ENCODE measurements at regions of chr9 and their contacts with region 1.

Region 1: DNA sequence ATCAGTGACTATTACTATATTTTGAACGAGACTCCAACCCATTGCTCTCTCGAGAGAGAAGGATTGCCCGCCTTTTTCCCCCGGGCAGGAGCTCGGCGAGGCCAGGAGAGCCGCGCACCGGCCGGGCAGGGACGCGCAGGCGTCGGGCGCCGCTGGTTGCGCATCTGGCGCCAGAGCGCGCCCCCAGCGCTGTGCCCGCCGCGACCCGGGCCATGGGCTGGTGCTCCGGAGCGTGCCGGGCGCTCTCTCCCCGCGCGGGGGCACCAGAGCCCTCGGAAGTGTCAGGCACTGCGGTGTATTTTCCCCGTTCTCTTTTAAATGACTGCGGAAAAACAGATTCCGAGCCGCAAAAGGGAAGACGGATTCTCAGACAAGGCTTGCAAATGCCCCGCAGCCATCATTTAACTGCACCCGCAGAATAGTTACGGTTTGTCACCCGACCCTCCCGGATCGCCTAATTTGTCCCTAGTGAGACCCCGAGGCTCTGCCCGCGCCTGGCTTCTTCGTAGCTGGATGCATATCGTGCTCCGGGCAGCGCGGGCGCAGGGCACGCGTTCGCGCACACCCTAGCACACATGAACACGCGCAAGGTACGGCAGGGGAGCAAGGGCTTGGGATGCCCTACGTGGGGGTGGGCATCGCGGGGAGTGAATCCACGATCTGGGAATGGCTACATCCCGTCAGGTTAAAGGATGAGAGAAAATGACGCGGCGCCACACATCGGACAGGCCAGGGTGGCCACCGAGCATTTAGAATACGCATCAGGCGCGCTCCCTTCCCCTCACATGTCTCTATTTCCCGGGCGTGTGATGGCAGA is 1.1 kb upstream of the NTRK2 start:
- DNase-seq: peak; percentile 92
- H3K4me3 ChIP-seq: peak overlapping the region; percentile 44 to 94 (median 45)
- H3K27ac ChIP-seq: peak overlapping the region; percentile 57 to 93 (median 89)
- H3K4me1 ChIP-seq: no peaks in the 10 kb centered on the region
- H3K27me3 ChIP-seq: no peaks in the 10 kb centered on the region
- CTCF ChIP-seq: peak; percentile 21 to 96 (median 75)
- POLR2A ChIP-seq: peak in 1 of 2 donors; percentile 37

Region 2: DNA sequence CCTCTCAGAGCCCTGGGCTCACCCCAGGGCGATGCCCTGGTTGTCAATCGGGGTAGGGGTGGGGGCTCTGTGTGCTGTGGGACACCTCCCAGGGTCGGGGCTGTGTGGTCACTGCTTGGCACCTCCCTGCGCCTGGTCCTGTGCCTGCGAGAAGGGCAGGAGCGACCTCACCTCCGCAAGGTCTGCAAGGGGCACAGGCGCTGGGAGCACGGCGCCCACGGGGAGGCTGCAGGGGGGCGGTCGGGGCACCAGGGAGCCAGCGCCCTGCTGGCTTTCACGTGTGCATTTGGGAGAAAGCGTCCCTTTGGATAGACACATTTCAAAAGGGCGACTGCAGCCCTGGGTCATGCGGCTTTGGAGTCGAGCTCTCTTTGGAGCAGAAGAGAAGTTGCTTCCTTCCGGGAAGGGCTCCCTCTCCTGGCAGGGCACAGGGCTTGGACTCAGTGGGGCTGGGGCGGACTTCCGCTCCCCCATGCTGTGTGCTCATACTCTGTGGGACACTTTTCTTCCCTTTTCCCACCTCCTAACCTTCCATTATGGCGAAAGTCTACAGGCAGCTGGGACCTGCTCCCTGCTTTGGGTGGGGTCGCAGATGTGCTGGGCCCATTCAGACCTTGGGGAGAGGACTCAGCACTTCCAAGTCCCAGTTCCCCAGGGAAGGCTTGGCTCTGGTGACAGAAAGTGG is 275.0 kb before region 1 on chr9:
- intact Hi-C with region 1: no loop called
- DNase-seq: no peak
- H3K4me3 ChIP-seq: no peak overlapping the region
- H3K27ac ChIP-seq: no peak overlapping the region
- H3K4me1 ChIP-seq: peaks cover 0 to 7% of the 10 kb centered on the region in 2 donors
- H3K27me3 ChIP-seq: no peaks in the 10 kb centered on the region
- CTCF ChIP-seq: no peak
- POLR2A ChIP-seq: no peak

Region 3: DNA sequence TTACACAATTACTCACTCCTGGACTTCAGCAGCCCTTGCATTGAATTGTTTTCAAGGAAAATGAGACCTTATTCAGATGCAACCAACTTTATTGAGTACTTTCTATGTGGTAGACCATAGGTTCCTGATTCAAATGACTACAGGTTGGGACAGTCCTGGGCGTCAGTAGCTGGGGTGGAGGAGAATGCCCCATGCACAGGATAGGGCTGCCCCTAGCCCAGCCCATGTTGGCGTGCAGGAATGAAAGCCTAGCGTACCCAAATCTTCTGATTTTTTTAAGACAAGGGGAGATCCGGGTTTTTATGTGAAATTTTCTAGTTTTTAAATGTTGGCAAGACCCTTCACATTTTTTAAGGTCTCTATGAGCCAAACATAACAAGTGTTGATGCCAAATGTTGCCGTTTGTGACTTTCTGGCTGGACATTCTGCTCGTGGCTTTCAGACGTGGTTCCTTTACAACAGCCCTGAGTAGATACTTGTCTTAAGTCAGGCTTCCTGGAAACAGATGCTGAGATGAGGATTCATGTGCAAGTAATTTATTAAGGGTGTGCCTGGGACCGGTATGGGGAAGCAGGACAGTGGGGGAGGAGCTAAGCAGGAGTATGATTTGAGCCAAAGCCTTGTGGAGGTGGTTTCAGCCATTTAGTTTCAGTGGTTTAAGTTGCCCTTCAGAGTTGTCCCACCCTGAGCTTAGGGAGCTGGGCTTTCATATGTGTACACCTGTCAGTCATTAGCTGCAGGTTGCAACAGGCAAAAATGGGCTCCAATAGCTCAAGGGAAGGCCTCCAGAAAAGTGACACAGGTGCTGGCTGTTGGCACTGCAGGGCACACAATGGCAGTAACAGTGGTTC is 155.2 kb after region 1 on chr9:
- intact Hi-C with region 1: no loop called
- DNase-seq: no peak
- H3K4me3 ChIP-seq: no peak overlapping the region
- H3K27ac ChIP-seq: no peak overlapping the region
- H3K4me1 ChIP-seq: peaks cover 17 to 34% of the 10 kb centered on the region in 2 donors
- H3K27me3 ChIP-seq: no peaks in the 10 kb centered on the region
- CTCF ChIP-seq: no peak
- POLR2A ChIP-seq: no peak

Region 4: GRCh38 chr9:84897362-84898094 is 229.1 kb after region 1 on chr9:
- intact Hi-C with region 1: no loop called
- DNase-seq: peak in 1 of 2 donors; percentile 55
- H3K4me3 ChIP-seq: no peak overlapping the region
- H3K27ac ChIP-seq: peak overlapping the region; percentile 24 to 83 (median 54)
- H3K4me1 ChIP-seq: peaks cover 16 to 19% of the 10 kb centered on the region in 2 donors
- H3K27me3 ChIP-seq: no peaks in the 10 kb centered on the region
- CTCF ChIP-seq: no peak
- POLR2A ChIP-seq: no peak

Region 5: GRCh38 chr9:84947363-84947972 is 279.1 kb after region 1 on chr9:
- intact Hi-C with region 1: loop called (anchors 5 kb)
- DNase-seq: no peak
- H3K4me3 ChIP-seq: no peak overlapping the region
- H3K27ac ChIP-seq: no peak overlapping the region
- H3K4me1 ChIP-seq: peaks cover 0 to 14% of the 10 kb centered on the region in 2 donors
- H3K27me3 ChIP-seq: no peaks in the 10 kb centered on the region
- CTCF ChIP-seq: no peak
- POLR2A ChIP-seq: no peak

Measured in thyroid gland (tissue), 4 donors.